ENCODE measurements at regions of chr16 and their contacts with region 1.

Region 1: GRCh38 chr16:212999-213398 is 16.2 kb downstream of the LUC7L start:
- DNase-seq: no peak
- H3K4me3 ChIP-seq: no peak overlapping the region
- H3K27ac ChIP-seq: no peak overlapping the region
- H3K4me1 ChIP-seq: peaks cover 4% of the 10 kb centered on the region
- H3K27me3 ChIP-seq: no peaks in the 10 kb centered on the region
- CTCF ChIP-seq: no peak

Region 2: DNA sequence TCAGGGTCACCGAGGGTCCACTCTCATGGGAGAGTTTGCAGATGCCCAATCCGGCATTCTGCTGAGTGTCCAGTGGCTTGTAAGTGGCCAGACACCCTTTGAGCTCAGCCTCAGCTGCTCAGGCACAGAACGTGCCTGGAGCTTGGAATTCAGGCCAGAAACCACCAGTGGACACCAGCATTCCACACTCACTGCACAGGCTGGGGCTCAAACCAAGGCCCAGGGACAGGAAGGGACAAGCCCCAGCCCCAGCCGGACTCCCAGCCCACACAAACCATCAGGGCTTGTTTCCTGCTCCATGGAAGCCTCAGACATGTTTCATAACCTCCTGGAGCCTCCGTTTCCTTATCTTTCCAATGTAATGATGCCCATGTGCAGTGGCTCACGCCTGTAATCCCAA is 69.5 kb before region 1 on chr16:
- CTCF ChIA-PET with region 1: no interaction called
- dilution Hi-C with region 1: loop called (anchors 5 kb)
- in situ Hi-C with region 1: no loop called
- intact Hi-C with region 1: no loop called
- DNase-seq: peak; percentile 21
- H3K4me3 ChIP-seq: no peak overlapping the region
- H3K27ac ChIP-seq: no peak overlapping the region
- H3K4me1 ChIP-seq: peaks cover 13% of the 10 kb centered on the region
- H3K27me3 ChIP-seq: no peaks in the 10 kb centered on the region
- CTCF ChIP-seq: no peak

Region 3: GRCh38 chr16:180938-181667 is 31.9 kb before region 1 on chr16:
- CTCF ChIA-PET with region 1: no interaction called
- dilution Hi-C with region 1: no loop called
- in situ Hi-C with region 1: no loop called
- intact Hi-C with region 1: no loop called
- DNase-seq: peak; percentile 57
- H3K4me3 ChIP-seq: peak overlapping the region in 2 of 3 experiments; percentile 20 to 33
- H3K27ac ChIP-seq: no peak overlapping the region
- H3K4me1 ChIP-seq: peaks cover 9% of the 10 kb centered on the region
- H3K27me3 ChIP-seq: peaks cover 7% of the 10 kb centered on the region
- CTCF ChIP-seq: peak; percentile 82 to 95

Measured in mammary epithelial cell (primary cell).